ENCODE measurements at regions of chr12 and their contacts with region 1.

Region 1: GRCh38 chr12:56224102-56224701 is at the start of gene NABP2:
- DNase-seq: peak; percentile 98 to 100 (median 99)
- ATAC-seq: peak; percentile 91
- H3K4me3 ChIP-seq: peak within 1 kb of the TSS; percentile 95
- H3K27ac ChIP-seq: peak within 1 kb of the TSS; percentile 93
- H3K4me1 ChIP-seq: peaks cover 26 to 31% of the 10 kb centered on the region in 2 experiments; a peak in 4 of 5 replicates
- H3K27me3 ChIP-seq: no peaks in the 10 kb centered on the region
- CTCF ChIP-seq: peak; percentile 81 to 96 (median 81)
- EP300 ChIP-seq: 0 out of 2 replicates have a peak, but pooled peaks have one; percentile 29
- POLR2A ChIP-seq: 0 out of 2 replicates have a peak, but pooled peaks have one; percentile 51
- RAD21 ChIP-seq: peak; percentile 77
- polyA plus RNA-seq, gene NABP2: 11.3 to 28.0 TPM

Region 2: GRCh38 chr12:56206457-56207166 is 17.6 kb before region 1 on chr12:
- CTCF ChIA-PET with region 1: interaction called, 9 read pairs
- POLR2A ChIA-PET with region 1: interaction called, 68 read pairs
- in situ Hi-C with region 1: no loop called
- intact Hi-C with region 1: loop called (anchors 1 kb)
- DNase-seq: peak; percentile 58 to 76 (median 66)
- ATAC-seq: peak; percentile 88
- H3K4me3 ChIP-seq: no peak overlapping the region
- H3K27ac ChIP-seq: no peak overlapping the region
- H3K4me1 ChIP-seq: peaks cover 2 to 25% of the 10 kb centered on the region in 2 experiments; a peak in 3 of 5 replicates
- H3K27me3 ChIP-seq: no peaks in the 10 kb centered on the region
- CTCF ChIP-seq: peak; percentile 83 to 89 (median 83)
- EP300 ChIP-seq: no peak
- POLR2A ChIP-seq: no peak
- RAD21 ChIP-seq: peak; percentile 55 to 73

Region 3: GRCh38 chr12:56258057-56258819 is 34.0 kb after region 1 on chr12 and contains the start of gene ANKRD52:
- CTCF ChIA-PET with region 1: interaction called, 3 read pairs
- POLR2A ChIA-PET with region 1: interaction called, 5 read pairs
- in situ Hi-C with region 1: no loop called
- intact Hi-C with region 1: loop called (anchors 2 kb)
- DNase-seq: peak; percentile 87 to 94 (median 94)
- ATAC-seq: peak; percentile 97
- H3K4me3 ChIP-seq: peak within 1 kb of the TSS; percentile 91
- H3K27ac ChIP-seq: peak within 1 kb of the TSS; percentile 84
- H3K4me1 ChIP-seq: peaks cover 12 to 20% of the 10 kb centered on the region in 2 experiments; a peak in 4 of 5 replicates
- H3K27me3 ChIP-seq: no peaks in the 10 kb centered on the region
- CTCF ChIP-seq: peak; percentile 45 to 96 (median 69); a peak in 5 of 6 replicates
- EP300 ChIP-seq: no peak
- POLR2A ChIP-seq: peak; percentile 77
- RAD21 ChIP-seq: peak; percentile 51 to 53
- polyA plus RNA-seq, gene ANKRD52: 0.52 to 0.55 TPM